ENCODE measurements at regions of chr1 and their contacts with region 1.

Region 1: DNA sequence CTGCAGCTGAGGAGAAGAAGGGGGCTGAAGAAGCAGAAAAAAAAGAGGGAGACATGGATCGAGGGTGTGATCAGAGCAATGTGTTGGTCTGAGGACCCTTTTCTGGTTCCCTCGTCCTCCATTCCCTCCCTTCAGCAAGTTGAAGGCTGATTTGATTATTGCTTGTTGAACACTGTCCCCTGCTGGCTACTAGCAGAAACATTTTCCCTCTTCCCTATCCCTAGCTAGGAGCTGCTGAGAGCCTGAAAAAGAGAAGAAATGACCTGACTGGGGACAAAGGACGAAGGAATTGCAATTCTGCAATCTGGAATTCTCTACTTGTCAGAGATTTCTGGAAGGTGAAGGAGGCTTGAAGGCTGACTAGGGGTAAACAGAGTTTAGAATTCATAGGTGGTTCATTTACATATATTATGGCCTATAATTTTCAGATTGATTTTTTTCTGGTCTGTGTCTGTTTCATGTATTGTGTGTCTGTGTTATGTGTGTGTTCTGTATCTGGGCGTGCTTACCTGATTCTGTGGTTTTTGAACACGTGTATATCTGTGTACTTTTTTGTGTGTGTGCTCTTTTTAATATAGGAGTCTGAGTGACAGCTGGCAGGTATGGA is 9.8 kb downstream of the NHLH1 start:
- DNase-seq: no peak
- ATAC-seq: peak; percentile 70
- H3K4me3 Mint-ChIP-seq: peak overlapping the region; percentile 33
- H3K27ac Mint-ChIP-seq: no peak overlapping the region
- H3K4me1 Mint-ChIP-seq: peaks cover 26% of the 10 kb centered on the region
- H3K27me3 Mint-ChIP-seq: no peaks in the 10 kb centered on the region
- CTCF ChIP-seq: peak; percentile 63

Region 2: GRCh38 chr1:159936273-159936904 is 440.2 kb before region 1 on chr1:
- CTCF ChIA-PET with region 1: no interaction called
- POLR2A ChIA-PET with region 1: no interaction called
- intact Hi-C with region 1: loop called (anchors 1 kb)
- DNase-seq: peak; percentile 86
- ATAC-seq: peak; percentile 89
- H3K4me3 Mint-ChIP-seq: peak overlapping the region; percentile 25
- H3K27ac Mint-ChIP-seq: no peak overlapping the region
- H3K4me1 Mint-ChIP-seq: peaks cover 47% of the 10 kb centered on the region
- H3K27me3 Mint-ChIP-seq: peaks cover 4% of the 10 kb centered on the region
- CTCF ChIP-seq: peak; percentile 91

Region 3: DNA sequence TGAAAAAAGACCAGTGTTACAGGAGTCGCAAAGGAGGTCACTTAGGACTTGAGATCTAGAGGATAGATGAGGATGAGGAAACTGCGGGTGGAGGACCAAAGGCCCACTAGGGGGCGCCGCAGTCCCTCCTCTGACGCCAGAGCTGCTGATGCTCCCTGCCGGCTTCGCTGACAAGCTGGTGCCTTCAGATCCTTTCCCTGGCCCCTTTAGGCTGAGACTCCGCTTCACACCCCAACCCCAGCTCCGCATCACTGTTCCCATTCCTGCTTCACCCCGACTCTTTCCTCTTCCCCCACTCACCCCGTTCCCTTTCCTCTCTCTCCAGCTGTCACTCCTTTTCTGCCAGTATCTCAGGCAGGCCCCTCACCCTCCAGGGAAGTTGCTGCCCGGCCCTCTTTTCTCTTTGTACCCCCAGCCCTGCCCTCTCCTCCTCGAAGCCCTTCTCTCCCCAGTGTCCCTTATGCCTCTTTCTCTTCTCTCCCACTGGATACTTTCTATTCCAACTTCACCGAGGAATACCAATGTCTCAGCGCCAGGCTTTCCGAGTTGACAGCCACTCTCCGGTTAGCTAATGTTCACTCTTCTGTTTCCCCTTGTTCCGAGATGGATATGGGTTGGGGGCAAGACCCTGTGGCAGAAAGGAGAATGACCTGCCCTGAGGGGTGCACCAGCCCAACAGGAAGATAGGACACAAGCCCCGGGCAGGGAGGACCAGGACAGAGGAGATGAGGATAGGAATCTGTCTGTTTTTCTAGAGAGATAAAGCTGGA is 290.8 kb before region 1 on chr1:
- CTCF ChIA-PET with region 1: interaction called, 10 read pairs
- POLR2A ChIA-PET with region 1: no interaction called
- intact Hi-C with region 1: loop called (anchors 1 kb)
- DNase-seq: peak; percentile 60
- ATAC-seq: peak; percentile 68
- H3K4me3 Mint-ChIP-seq: no peak overlapping the region
- H3K27ac Mint-ChIP-seq: no peak overlapping the region
- H3K4me1 Mint-ChIP-seq: peaks cover 14% of the 10 kb centered on the region
- H3K27me3 Mint-ChIP-seq: peaks cover 16% of the 10 kb centered on the region
- CTCF ChIP-seq: no peak

Region 4: GRCh38 chr1:160108888-160109662 is 267.6 kb before region 1 on chr1:
- CTCF ChIA-PET with region 1: interaction called, 62 read pairs
- POLR2A ChIA-PET with region 1: interaction called, 3 read pairs
- intact Hi-C with region 1: loop called (anchors 2 kb)
- DNase-seq: no peak
- ATAC-seq: peak; percentile 61
- H3K4me3 Mint-ChIP-seq: no peak overlapping the region
- H3K27ac Mint-ChIP-seq: no peak overlapping the region
- H3K4me1 Mint-ChIP-seq: peaks cover 5% of the 10 kb centered on the region
- H3K27me3 Mint-ChIP-seq: peaks cover 11% of the 10 kb centered on the region
- CTCF ChIP-seq: no peak

Region 5: GRCh38 chr1:160251687-160252526 is 124.7 kb before region 1 on chr1:
- CTCF ChIA-PET with region 1: interaction called, 12 read pairs
- POLR2A ChIA-PET with region 1: no interaction called
- intact Hi-C with region 1: no loop called
- DNase-seq: no peak
- ATAC-seq: peak; percentile 98
- H3K4me3 Mint-ChIP-seq: no peak overlapping the region
- H3K27ac Mint-ChIP-seq: peak overlapping the region; percentile 50
- H3K4me1 Mint-ChIP-seq: peaks cover 8% of the 10 kb centered on the region
- H3K27me3 Mint-ChIP-seq: no peaks in the 10 kb centered on the region
- CTCF ChIP-seq: peak; percentile 36

Region 6: DNA sequence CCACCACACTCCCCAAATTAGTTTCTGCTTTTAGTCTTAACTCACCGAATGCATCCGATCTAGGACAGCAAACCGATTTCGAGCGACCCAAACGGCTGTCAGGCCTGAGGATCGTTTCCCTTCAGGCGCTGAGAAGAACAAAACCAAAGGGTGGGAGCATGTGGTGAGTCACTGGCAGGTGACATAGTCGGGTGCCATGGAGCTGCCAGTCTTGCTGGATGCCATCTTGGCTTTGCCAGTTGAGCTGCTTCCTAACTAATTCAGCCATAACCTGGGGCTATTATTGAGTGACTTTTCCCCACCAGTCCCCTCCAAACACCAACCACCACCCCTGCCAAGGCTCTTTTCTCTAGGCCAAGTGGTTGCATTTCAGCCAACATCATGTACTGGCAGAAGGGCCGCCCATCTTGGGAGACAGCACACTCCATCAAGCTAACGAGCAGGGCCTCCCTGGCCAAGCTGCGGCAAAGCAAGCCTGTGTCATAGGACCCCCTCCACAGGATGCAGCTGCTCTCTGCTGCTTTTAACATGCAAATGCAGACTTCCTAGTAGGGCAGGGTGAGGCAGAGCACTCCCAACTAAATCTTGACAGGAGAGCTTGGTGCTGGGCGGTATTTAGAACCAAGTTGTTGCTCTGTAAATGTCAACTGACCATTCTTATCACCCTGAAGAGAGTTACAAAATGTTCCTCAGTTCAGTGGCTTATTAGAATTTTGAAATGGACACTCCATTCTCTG is 69.3 kb before region 1 on chr1:
- CTCF ChIA-PET with region 1: no interaction called
- POLR2A ChIA-PET with region 1: interaction called, 4 read pairs
- intact Hi-C with region 1: loop called (anchors 5 kb)
- DNase-seq: peak; percentile 22
- ATAC-seq: peak; percentile 96
- H3K4me3 Mint-ChIP-seq: no peak overlapping the region
- H3K27ac Mint-ChIP-seq: peak overlapping the region; percentile 81
- H3K4me1 Mint-ChIP-seq: peaks cover 39% of the 10 kb centered on the region
- H3K27me3 Mint-ChIP-seq: no peaks in the 10 kb centered on the region
- CTCF ChIP-seq: no peak

Region 7: GRCh38 chr1:160354388-160354985 is 22.1 kb before region 1 on chr1:
- CTCF ChIA-PET with region 1: interaction called, 30 read pairs
- POLR2A ChIA-PET with region 1: interaction called, 4 read pairs
- intact Hi-C with region 1: loop called (anchors 1 kb)
- DNase-seq: no peak
- ATAC-seq: peak; percentile 54
- H3K4me3 Mint-ChIP-seq: no peak overlapping the region
- H3K27ac Mint-ChIP-seq: no peak overlapping the region
- H3K4me1 Mint-ChIP-seq: no peaks in the 10 kb centered on the region
- H3K27me3 Mint-ChIP-seq: no peaks in the 10 kb centered on the region
- CTCF ChIP-seq: no peak